Thyroid gland (tissue), 4 donors: ENCODE measurements at regions of chr20 and their contacts with region 1.

Region 1: DNA sequence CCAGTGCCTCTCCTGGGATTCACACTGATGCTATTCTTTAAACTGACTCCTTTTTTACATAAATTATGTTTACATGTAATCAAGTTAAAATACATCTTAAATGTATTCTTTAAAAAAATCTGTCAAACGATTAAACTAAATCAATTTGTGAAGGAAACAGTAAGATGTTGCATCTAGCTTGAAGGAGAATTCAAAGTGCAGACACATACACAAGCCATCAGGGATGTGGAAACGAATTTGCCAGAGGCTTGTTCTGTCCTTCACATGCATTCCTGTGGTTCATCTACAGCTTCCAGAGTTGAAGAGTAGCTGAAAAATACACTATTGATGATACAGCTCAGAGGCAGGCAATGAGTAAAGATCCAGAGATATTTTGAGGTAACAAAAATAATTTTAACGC is 7.3 kb upstream of the BPIFB3 start:
- DNase-seq: no peak
- H3K4me3 ChIP-seq: no peak overlapping the region
- H3K27ac ChIP-seq: no peak overlapping the region
- H3K4me1 ChIP-seq: no peaks in the 10 kb centered on the region
- H3K27me3 ChIP-seq: no peaks in the 10 kb centered on the region
- CTCF ChIP-seq: no peak
- POLR2A ChIP-seq: no peak

Region 2: GRCh38 chr20:33119725-33120720 is 73.6 kb after region 1 on chr20:
- intact Hi-C with region 1: loop called (anchors 10 kb)
- DNase-seq: no peak
- H3K4me3 ChIP-seq: no peak overlapping the region
- H3K27ac ChIP-seq: no peak overlapping the region
- H3K4me1 ChIP-seq: no peaks in the 10 kb centered on the region
- H3K27me3 ChIP-seq: no peaks in the 10 kb centered on the region
- CTCF ChIP-seq: no peak
- POLR2A ChIP-seq: no peak

Region 3: DNA sequence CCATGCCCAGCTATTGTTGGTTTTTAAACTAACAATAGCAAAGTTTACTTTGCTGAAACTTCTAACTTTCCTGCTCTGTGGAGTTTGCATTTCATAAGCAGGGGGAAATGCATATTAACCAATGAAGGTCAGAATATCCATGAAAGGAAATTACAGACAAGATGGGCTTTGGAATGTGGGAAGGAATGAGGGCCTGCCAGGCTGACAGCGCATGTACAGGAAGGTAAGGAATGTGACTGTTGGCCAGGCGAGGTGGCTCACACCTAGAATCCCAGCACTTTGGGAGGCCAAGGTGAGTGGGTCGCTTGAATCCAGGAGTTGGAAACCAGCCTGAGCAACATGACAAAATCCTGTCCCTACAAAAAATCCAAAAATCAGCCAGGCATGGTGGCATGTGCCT is 305.3 kb after region 1 on chr20:
- intact Hi-C with region 1: no loop called
- DNase-seq: no peak
- H3K4me3 ChIP-seq: no peak overlapping the region
- H3K27ac ChIP-seq: no peak overlapping the region
- H3K4me1 ChIP-seq: no peaks in the 10 kb centered on the region
- H3K27me3 ChIP-seq: no peaks in the 10 kb centered on the region
- CTCF ChIP-seq: no peak
- POLR2A ChIP-seq: no peak